Pancreas (tissue), 10 donors: ENCODE measurements at regions of chr2 and their contacts with region 1.

Region 1: GRCh38 chr2:19863303-19864041 is 38.3 kb downstream of the TTC32 start:
- DNase-seq: peak; percentile 37 to 91 (median 72)
- ATAC-seq: peak; percentile 90 to 97 (median 94)
- H3K4me3 ChIP-seq: peak overlapping the region in 1 of 4 donors; percentile 29
- H3K27ac ChIP-seq: no peak overlapping the region
- H3K4me1 ChIP-seq: peaks cover 0 to 4% (median 0%) of the 10 kb centered on the region in 3 donors
- H3K27me3 ChIP-seq: no peaks in the 10 kb centered on the region
- CTCF ChIP-seq: peak; percentile 91 to 96 (median 94)

Region 2: DNA sequence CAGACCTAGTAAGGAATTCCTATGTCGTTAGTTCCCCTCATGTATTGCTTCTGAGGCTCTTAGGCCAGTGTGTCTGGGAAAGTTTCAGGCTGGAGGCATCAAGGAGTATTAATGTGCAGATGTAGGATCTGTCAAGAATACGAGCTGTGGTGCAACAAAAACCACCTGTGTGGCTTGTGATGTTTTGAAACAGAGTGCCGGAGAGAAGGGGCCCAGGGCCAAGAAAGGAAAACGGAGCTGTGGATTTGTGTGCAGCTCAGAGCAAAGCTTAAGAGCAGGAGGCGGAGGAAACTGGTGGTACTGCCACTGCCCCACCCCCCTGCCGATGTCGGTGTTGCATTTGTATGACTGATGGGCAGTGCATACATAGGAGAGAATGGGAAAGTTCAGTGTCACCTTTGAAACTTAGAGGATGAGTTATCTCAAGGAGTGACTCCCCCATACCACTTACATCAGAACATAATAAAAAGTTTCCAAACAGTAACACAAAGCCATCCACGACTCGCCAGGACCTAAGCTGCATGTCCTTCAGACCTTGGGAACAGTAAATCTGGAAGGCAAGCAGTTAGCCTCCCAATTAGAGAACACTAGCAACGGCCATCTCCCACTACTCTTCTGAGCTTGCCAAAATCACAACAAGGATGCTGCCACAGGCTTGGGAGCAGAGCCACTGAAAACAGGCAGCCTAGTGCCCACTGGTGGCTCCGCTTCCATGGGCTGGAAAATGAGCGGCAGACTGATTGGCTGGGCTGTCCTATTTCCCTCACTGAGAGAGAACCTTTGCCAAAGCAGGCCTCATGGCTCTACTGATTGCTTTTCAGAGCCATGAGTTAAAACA is 1121.4 kb before region 1 on chr2:
- intact Hi-C with region 1: loop called in 1 of 3 experiments (anchors 5 kb)
- DNase-seq: no peak
- ATAC-seq: no peak
- H3K4me3 ChIP-seq: no peak overlapping the region
- H3K27ac ChIP-seq: no peak overlapping the region
- H3K4me1 ChIP-seq: no peaks in the 10 kb centered on the region
- H3K27me3 ChIP-seq: no peaks in the 10 kb centered on the region
- CTCF ChIP-seq: no peak

Region 3: GRCh38 chr2:20106746-20107145 is 243.3 kb after region 1 on chr2:
- intact Hi-C with region 1: no loop called
- DNase-seq: peak; percentile 53 to 87 (median 78)
- ATAC-seq: peak; percentile 69 to 90 (median 86)
- H3K4me3 ChIP-seq: peak overlapping the region in 2 of 4 donors; percentile 26 to 27
- H3K27ac ChIP-seq: no peak overlapping the region
- H3K4me1 ChIP-seq: no peaks in the 10 kb centered on the region
- H3K27me3 ChIP-seq: no peaks in the 10 kb centered on the region
- CTCF ChIP-seq: peak in 3 of 4 donors; percentile 34 to 54 (median 45)